ENCODE measurements at regions of chr16 and their contacts with region 1.

Region 1: GRCh38 chr16:15643048-15643945 is at the start of gene MARF1:
- DNase-seq: peak; percentile 99 to 100 (median 99)
- H3K4me3 ChIP-seq: peak within 1 kb of the TSS; percentile 95 to 100
- H3K4me3 Mint-ChIP-seq: peak within 1 kb of the TSS; percentile 87 to 95 (median 92)
- H3K27ac ChIP-seq: peak within 1 kb of the TSS; percentile 91
- H3K27ac Mint-ChIP-seq: peak within 1 kb of the TSS; percentile 99
- H3K4me1 ChIP-seq: peaks cover 50% of the 10 kb centered on the region
- H3K4me1 Mint-ChIP-seq: peaks cover 31 to 57% (median 41%) of the 10 kb centered on the region in 4 donors
- H3K27me3 ChIP-seq: no peaks in the 10 kb centered on the region
- H3K27me3 Mint-ChIP-seq: no peaks in the 10 kb centered on the region
- total RNA-seq, gene MARF1: 223 to 235 TPM

Region 2: GRCh38 chr16:15427648-15428239 is 215.6 kb before region 1 on chr16:
- CTCF ChIA-PET with region 1: interaction called, 22 read pairs
- POLR2A ChIA-PET with region 1: interaction called, 6 read pairs
- intact Hi-C with region 1: loop called (anchors 1 kb)
- DNase-seq: peak; percentile 27 to 53 (median 40)
- H3K4me3 ChIP-seq: no peak overlapping the region
- H3K4me3 Mint-ChIP-seq: no peak overlapping the region
- H3K27ac ChIP-seq: no peak overlapping the region
- H3K27ac Mint-ChIP-seq: peak overlapping the region in 1 of 7 donors; percentile 56
- H3K4me1 ChIP-seq: no peaks in the 10 kb centered on the region
- H3K4me1 Mint-ChIP-seq: peaks cover 0 to 3% (median under 1%) of the 10 kb centered on the region in 4 donors
- H3K27me3 ChIP-seq: no peaks in the 10 kb centered on the region
- H3K27me3 Mint-ChIP-seq: peaks cover 6 to 7% of the 10 kb centered on the region in 2 donors

Region 3: DNA sequence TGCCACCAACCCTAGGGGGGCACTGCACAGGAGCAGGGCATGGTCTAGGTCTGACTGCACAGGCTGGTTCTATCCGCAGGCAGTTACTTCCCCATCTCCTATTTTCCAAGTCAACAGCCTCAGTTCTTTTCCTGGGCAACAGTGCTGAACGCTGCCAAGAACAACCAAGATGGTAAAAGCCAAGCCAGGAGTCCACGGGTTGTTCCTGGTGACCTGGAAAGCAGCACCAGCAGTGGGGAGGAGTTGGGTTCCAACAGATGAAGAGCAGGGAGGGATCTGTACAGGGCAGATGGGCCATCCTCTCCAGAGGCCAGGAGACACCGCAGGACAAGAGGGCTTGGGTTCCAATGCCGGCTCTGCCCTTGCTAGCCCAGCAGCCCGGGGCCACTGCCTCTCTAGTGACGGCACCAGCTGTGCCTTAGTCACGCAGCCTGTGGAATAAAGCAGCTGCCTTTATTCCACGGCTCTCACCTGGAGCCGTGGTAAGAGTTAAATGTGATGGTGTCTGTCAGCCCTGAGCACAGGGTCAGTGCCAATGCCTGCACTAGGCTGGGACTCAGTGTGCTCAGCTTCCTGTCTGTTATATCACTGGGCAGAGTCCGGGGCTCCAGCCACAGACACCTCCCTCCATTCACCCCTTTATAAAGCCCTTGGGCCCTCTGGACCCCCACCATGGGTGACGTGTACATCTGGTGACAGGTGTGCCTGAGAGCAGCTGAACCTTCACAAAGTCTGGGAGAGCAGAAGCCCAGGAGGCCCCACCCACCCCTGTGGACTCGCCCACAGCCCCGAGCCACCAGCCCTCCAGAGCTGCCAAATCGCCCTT is 45.3 kb before region 1 on chr16:
- CTCF ChIA-PET with region 1: interaction called, 7 read pairs
- POLR2A ChIA-PET with region 1: interaction called, 71 read pairs
- intact Hi-C with region 1: no loop called
- DNase-seq: no peak
- H3K4me3 ChIP-seq: no peak overlapping the region
- H3K4me3 Mint-ChIP-seq: no peak overlapping the region
- H3K27ac ChIP-seq: no peak overlapping the region
- H3K27ac Mint-ChIP-seq: peak overlapping the region in 3 of 7 donors; percentile 41 to 53 (median 53)
- H3K4me1 ChIP-seq: peaks cover 8% of the 10 kb centered on the region
- H3K4me1 Mint-ChIP-seq: peaks cover 6 to 19% (median 10%) of the 10 kb centered on the region in 4 donors
- H3K27me3 ChIP-seq: no peaks in the 10 kb centered on the region
- H3K27me3 Mint-ChIP-seq: no peaks in the 10 kb centered on the region

Region 4: GRCh38 chr16:15665107-15665506 is 21.8 kb after region 1 on chr16:
- CTCF ChIA-PET with region 1: interaction called, 25 read pairs
- POLR2A ChIA-PET with region 1: interaction called, 83 read pairs
- intact Hi-C with region 1: no loop called
- DNase-seq: no peak
- H3K4me3 ChIP-seq: no peak overlapping the region
- H3K4me3 Mint-ChIP-seq: no peak overlapping the region
- H3K27ac ChIP-seq: no peak overlapping the region
- H3K27ac Mint-ChIP-seq: no peak overlapping the region
- H3K4me1 ChIP-seq: peaks cover 15% of the 10 kb centered on the region
- H3K4me1 Mint-ChIP-seq: peaks cover 12 to 29% (median 23%) of the 10 kb centered on the region in 4 donors
- H3K27me3 ChIP-seq: no peaks in the 10 kb centered on the region
- H3K27me3 Mint-ChIP-seq: no peaks in the 10 kb centered on the region

Region 5: GRCh38 chr16:15704545-15704987 is 61.3 kb after region 1 on chr16:
- CTCF ChIA-PET with region 1: interaction called, 21 read pairs
- POLR2A ChIA-PET with region 1: interaction called, 3 read pairs
- intact Hi-C with region 1: no loop called
- DNase-seq: peak; percentile 57 to 68 (median 64)
- H3K4me3 ChIP-seq: no peak overlapping the region
- H3K4me3 Mint-ChIP-seq: no peak overlapping the region
- H3K27ac ChIP-seq: no peak overlapping the region
- H3K27ac Mint-ChIP-seq: peak overlapping the region in 5 of 7 donors; percentile 17 to 78 (median 72)
- H3K4me1 ChIP-seq: no peaks in the 10 kb centered on the region
- H3K4me1 Mint-ChIP-seq: peaks cover 5 to 7% (median 6%) of the 10 kb centered on the region in 4 donors
- H3K27me3 ChIP-seq: no peaks in the 10 kb centered on the region
- H3K27me3 Mint-ChIP-seq: no peaks in the 10 kb centered on the region

Measured in CD4-positive, alpha-beta memory T cell (primary cell).